ENCODE measurements at regions of chr9 and their contacts with region 1.

Region 1: DNA sequence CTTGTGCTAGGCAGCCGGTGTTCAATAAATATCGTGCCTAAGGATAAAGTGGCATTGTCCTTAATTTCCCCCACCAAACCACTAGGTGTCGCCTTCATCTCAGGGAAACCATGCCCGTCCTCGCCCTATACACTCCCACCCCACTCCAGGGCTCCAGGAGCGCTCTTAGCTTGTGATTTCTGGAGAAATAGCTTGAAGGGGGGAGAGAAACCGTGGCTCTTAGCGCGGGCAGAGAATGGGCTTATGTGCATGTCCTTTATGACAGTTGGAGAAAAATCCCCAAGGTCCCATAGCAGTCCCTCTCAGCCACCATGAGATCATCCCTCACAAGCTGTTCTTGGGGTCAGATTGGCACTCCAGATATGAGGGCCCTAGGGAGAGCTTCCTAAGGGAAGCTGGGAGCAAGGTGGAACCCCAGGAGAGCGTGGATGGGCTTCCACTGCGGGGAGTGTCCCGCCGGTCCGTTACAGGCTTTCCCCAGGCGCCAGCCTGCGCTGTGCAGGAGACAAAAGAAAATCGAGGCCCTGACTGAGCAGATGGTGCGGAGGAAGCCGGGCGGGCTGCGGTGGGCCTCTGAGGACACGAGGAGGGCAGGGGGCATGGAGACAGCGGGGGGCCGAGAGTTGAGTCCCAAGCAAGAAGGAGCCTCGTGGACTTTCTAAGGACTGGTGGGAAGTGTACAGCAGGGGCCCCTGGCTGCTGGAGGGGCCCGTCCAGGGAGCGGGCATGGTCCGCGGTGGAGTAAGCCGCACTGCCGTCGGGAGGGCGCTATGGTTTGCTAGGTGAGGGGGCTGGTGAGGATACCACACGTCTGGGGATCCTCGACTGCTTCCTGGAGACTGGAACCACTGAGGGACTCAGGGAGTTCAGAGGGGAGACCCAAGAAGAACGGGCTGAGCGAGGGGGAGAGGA is 750 bp upstream of the NPR2 start:
- DNase-seq: peak; percentile 67
- ATAC-seq: peak; percentile 94
- H3K4me3 Mint-ChIP-seq: no peak overlapping the region
- H3K27ac Mint-ChIP-seq: no peak overlapping the region
- H3K4me1 Mint-ChIP-seq: peaks cover 3% of the 10 kb centered on the region
- H3K27me3 Mint-ChIP-seq: no peaks in the 10 kb centered on the region

Region 2: GRCh38 chr9:35071814-35072460 is 718.7 kb before region 1 on chr9:
- CTCF ChIA-PET with region 1: no interaction called
- POLR2A ChIA-PET with region 1: no interaction called
- intact Hi-C with region 1: no loop called
- DNase-seq: peak; percentile 83
- ATAC-seq: peak; percentile 47
- H3K4me3 Mint-ChIP-seq: peak overlapping the region; percentile 91
- H3K27ac Mint-ChIP-seq: peak overlapping the region; percentile 95
- H3K4me1 Mint-ChIP-seq: peaks cover 56% of the 10 kb centered on the region
- H3K27me3 Mint-ChIP-seq: no peaks in the 10 kb centered on the region

Region 3: DNA sequence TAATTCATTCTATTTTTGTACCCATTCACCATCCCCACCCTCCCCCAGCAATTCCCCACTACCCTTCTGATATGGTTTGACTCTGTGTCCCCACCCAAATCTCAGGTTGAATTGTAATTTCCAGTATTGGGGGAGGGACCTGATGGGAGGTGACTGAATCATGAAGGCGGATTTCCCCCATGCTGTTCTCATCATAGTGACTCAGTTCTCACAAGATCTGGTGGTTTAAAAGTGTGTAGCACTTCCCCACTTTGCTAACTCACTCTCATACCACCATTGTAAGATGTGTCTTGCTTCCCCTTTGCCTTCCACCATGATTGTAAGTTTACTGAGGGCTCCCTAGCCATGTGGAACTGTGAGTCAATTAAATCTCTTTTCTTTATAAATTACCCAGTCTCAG is 211.5 kb before region 1 on chr9:
- CTCF ChIA-PET with region 1: no interaction called
- POLR2A ChIA-PET with region 1: no interaction called
- intact Hi-C with region 1: no loop called
- DNase-seq: peak; percentile 69
- ATAC-seq: peak; percentile 96
- H3K4me3 Mint-ChIP-seq: peak overlapping the region; percentile 28
- H3K27ac Mint-ChIP-seq: peak overlapping the region; percentile 89
- H3K4me1 Mint-ChIP-seq: peaks cover 23% of the 10 kb centered on the region
- H3K27me3 Mint-ChIP-seq: no peaks in the 10 kb centered on the region

Region 4: GRCh38 chr9:35700038-35700437 is 90.6 kb before region 1 on chr9:
- CTCF ChIA-PET with region 1: no interaction called
- POLR2A ChIA-PET with region 1: no interaction called
- intact Hi-C with region 1: no loop called
- DNase-seq: no peak
- ATAC-seq: no peak
- H3K4me3 Mint-ChIP-seq: no peak overlapping the region
- H3K27ac Mint-ChIP-seq: no peak overlapping the region
- H3K4me1 Mint-ChIP-seq: peaks cover 1% of the 10 kb centered on the region
- H3K27me3 Mint-ChIP-seq: no peaks in the 10 kb centered on the region

Region 5: GRCh38 chr9:35829084-35829763 is 38.6 kb after region 1 on chr9 and contains the start of gene TMEM8B:
- CTCF ChIA-PET with region 1: interaction called, 15 read pairs
- POLR2A ChIA-PET with region 1: no interaction called
- intact Hi-C with region 1: loop called (anchors 1 kb)
- DNase-seq: peak; percentile 98
- ATAC-seq: peak; percentile 92
- H3K4me3 Mint-ChIP-seq: peak within 1 kb of the TSS; percentile 78
- H3K27ac Mint-ChIP-seq: peak within 1 kb of the TSS; percentile 78
- H3K4me1 Mint-ChIP-seq: peaks cover 13% of the 10 kb centered on the region
- H3K27me3 Mint-ChIP-seq: no peaks in the 10 kb centered on the region
- total RNA-seq, gene TMEM8B: 5.8 to 6.9 TPM

Measured in activated CD4-positive, alpha-beta T cell treated with anti-CD3 and anti-CD28 coated beads for 36 hours (primary cell).